PC-3 (cell line): ENCODE measurements at regions of chr20 and their contacts with region 1.

Region 1: GRCh38 chr20:59032023-59032712 is at the start of gene ATP5F1E:
- DNase-seq: peak; percentile 98
- ATAC-seq: peak; percentile 91
- H3K4me3 ChIP-seq: peak within 1 kb of the TSS; percentile 77
- H3K27ac ChIP-seq: peak within 1 kb of the TSS; percentile 68
- H3K4me1 ChIP-seq: peaks cover 54% of the 10 kb centered on the region
- H3K27me3 ChIP-seq: no peaks in the 10 kb centered on the region
- CTCF ChIP-seq: no peak
- total RNA-seq, gene ATP5F1E: 47.1 and 58.5 TPM in 2 replicates

Region 2: DNA sequence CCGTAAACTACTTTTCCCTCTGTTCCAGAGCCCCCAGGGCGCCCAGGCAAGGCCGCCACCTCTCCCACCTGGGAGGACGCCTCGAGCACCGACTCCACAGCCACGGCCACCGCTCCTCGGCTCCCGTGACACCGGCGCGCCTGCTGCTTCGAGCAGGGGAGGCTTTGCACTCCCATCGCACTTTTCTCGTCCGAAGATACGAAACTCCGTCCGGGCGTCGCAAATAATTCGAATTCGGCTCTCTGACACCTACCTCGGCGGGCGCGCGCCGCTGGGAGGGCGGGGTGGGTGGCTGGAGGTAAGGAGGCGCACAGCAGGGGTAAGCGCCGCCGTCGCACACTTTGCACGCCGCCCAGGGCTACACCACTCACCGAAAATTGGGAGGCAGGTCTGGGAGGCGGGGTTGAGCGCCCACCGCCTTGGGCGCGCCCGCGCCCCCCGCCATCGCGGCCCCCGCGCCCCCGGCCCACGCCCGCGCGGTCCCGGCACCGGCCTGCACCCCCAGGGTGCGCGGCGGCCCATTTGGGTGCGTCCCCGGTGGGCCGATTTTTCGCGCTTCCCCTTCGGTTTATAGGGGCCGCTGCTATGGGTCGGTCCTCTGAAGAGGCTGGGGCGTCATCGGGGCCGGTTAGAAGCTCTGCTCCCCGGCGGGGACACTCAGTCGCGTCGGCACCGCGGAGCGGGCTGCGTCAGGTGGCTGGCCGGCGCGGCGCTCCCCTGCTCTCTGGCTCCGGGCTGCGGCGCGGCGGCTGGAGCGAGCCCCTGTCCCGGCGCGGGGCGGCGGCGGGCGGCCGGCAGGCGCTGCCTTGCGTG is 143.4 kb before region 1 on chr20:
- CTCF ChIA-PET with region 1: no interaction called
- POLR2A ChIA-PET with region 1: no interaction called
- intact Hi-C with region 1: loop called (anchors 5 kb)
- DNase-seq: peak; percentile 83
- ATAC-seq: peak; percentile 65
- H3K4me3 ChIP-seq: peak overlapping the region; percentile 81
- H3K27ac ChIP-seq: no peak overlapping the region
- H3K4me1 ChIP-seq: peaks cover 24% of the 10 kb centered on the region
- H3K27me3 ChIP-seq: no peaks in the 10 kb centered on the region
- CTCF ChIP-seq: no peak

Region 3: GRCh38 chr20:58993332-58994201 is 38.6 kb before region 1 on chr20:
- CTCF ChIA-PET with region 1: no interaction called
- POLR2A ChIA-PET with region 1: interaction called, 4 read pairs
- intact Hi-C with region 1: loop called (anchors 5 kb)
- DNase-seq: peak; percentile 25
- ATAC-seq: peak; percentile 73
- H3K4me3 ChIP-seq: no peak overlapping the region
- H3K27ac ChIP-seq: no peak overlapping the region
- H3K4me1 ChIP-seq: peaks cover 19% of the 10 kb centered on the region
- H3K27me3 ChIP-seq: no peaks in the 10 kb centered on the region
- CTCF ChIP-seq: no peak

Region 4: DNA sequence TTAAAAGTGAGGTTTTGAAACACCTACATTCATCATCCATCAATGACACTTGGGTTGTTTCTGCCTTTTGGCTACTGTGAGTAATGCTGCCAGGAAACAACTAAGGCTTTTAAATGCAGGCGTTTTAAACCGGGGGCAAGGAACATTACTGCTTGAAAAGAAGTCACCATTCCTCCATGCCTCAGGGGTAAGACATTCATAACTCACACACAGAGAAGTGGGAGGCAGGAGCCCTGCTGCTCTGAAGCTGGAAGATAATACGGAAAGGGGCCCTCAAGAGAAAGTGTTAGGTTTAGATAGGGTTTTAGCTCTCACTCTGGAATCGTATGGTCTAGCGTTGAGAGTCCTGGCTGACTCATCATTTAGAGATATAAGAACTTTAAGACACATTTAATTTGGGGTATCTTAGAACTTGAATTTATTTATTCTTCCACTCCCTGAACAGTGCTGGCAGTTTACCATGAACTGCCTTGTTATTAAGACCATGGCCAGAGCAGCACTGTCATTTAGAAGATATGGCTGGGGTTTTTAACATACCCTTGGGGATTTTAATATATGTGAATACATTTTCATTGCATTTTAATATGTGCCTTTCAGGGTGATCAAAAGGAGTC is 11.1 kb before region 1 on chr20:
- CTCF ChIA-PET with region 1: interaction called, 3 read pairs
- POLR2A ChIA-PET with region 1: interaction called, 3 read pairs
- intact Hi-C with region 1: loop called (anchors 1 kb)
- DNase-seq: peak; percentile 73
- ATAC-seq: peak; percentile 66
- H3K4me3 ChIP-seq: no peak overlapping the region
- H3K27ac ChIP-seq: no peak overlapping the region
- H3K4me1 ChIP-seq: peaks cover 17% of the 10 kb centered on the region
- H3K27me3 ChIP-seq: no peaks in the 10 kb centered on the region
- CTCF ChIP-seq: no peak